ENCODE measurements at regions of chr16 and their contacts with region 1.

Region 1: GRCh38 chr16:52022177-52022576 is 524.8 kb downstream of the TOX3 start:
- DNase-seq: no peak
- H3K4me3 ChIP-seq: no peak overlapping the region
- H3K27ac ChIP-seq: no peak overlapping the region
- H3K4me1 ChIP-seq: no peaks in the 10 kb centered on the region
- CTCF ChIP-seq: no peak

Region 2: DNA sequence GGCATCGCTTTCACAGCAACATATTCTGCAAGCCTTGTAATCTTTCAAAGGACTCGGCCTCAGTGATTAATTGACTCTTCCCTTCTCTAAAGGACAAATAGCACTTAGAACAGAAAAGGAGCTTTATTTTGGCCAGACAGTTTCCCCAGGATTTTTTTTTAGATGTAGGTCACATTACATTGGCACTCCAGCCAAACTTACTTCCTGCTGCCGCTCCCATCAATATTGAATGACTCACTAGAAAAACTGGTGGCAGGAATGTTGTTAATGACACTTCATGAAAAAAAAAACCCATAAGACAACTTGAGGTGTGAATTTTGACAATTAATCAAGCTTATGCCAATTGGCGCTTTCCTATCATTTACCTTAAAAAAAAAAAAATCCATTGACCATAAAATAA is 92.2 kb after region 1 on chr16:
- CTCF ChIA-PET with region 1: no interaction called
- POLR2A ChIA-PET with region 1: interaction called, 13 read pairs
- intact Hi-C with region 1: no loop called
- DNase-seq: no peak
- H3K4me3 ChIP-seq: no peak overlapping the region
- H3K27ac ChIP-seq: no peak overlapping the region
- H3K4me1 ChIP-seq: no peaks in the 10 kb centered on the region
- CTCF ChIP-seq: no peak